Natural killer cell (primary cell): ENCODE measurements at regions of chr20 and their contacts with region 1.

Region 1: DNA sequence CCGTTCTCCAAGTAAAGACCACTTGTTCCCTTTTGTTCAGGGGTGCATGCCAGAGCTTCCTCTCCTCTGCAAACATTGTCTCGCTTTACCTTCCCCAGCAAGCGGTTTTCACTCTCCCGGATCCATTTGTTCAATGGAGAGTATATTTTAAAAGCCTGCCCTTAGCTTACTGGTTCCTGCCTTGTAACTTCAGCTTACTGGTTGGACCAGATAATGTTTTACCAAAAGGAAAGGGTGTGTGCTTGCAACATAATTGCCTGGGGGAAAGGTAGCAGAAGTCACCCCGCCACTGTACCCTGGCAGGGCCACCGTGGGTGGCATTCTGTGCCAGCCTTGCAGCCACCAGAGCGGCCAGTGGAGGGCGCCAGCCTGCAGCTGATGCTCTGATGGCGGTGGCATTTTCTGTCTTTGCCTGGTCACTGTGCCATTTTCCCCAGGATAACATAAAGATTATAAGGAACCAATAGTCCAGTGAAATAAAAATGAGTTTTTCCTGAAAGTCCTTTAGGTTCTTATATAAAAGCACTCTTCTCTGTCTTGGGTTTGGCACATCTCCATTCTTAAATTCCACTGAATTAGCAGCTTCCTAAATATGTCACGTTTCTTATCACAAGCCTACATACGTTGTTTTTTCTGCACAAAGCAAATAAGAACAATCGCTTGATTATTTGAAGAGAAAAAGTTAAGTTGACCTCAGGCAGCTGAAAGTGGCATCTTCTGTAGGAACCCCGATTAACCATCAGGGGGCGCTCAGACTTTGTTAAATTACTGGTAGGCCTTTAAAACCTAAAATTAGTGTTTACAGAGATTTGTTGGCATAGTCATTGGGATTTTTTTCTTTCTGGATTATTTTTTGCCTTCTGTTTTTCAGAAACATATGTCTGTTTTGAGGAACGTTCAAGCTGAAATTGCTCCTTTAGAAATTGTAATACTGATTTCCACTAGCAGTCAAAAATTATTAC is 67.4 kb upstream of the XRN2 start:
- DNase-seq: peak; percentile 33 to 77
- ATAC-seq: peak; percentile 73 to 81 (median 74)
- H3K4me3 ChIP-seq: no peak overlapping the region
- H3K4me3 Mint-ChIP-seq: no peak overlapping the region
- H3K27ac ChIP-seq: no peak overlapping the region
- H3K27ac Mint-ChIP-seq: no peak overlapping the region
- H3K4me1 ChIP-seq: peaks cover 4% of the 10 kb centered on the region
- H3K4me1 Mint-ChIP-seq: peaks cover 4 to 6% of the 10 kb centered on the region in 2 donors
- H3K27me3 ChIP-seq: no peaks in the 10 kb centered on the region
- H3K27me3 Mint-ChIP-seq: no peaks in the 10 kb centered on the region
- CTCF ChIP-seq: peak; percentile 83

Region 2: DNA sequence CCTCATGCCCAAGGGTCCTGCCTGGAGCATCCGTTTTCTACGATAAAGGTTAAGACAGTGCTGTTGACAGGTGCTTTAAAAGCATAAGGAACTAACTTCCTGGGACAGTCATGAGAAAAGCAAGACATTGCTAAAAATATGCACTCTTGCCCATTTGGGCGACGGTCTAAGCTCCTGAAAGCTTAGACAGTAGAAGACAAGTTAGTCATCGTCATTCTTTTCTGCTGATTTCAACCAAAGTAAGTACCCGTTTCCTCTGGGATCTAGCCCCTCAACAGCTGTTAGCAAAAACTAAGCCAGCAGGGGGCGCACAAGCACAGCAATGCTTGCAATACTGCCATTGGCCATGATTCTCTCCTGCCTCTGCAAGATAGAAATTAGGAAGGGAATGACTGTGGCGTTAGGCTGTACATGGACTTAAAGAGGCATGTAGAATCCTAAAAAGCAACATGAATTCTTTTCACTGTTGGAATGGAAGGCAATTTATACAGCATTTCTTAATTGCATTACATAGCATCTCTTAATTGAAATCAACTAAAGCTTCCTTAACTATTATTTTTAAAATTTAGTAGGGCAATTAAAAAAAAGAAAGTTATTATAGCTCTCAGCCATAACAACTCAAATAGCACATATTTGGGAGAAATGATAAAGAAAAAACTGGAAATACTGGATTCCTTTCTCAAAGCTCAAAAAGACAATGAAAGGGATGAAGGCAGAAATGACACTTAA is 375.5 kb before region 1 on chr20:
- intact Hi-C with region 1: loop called (anchors 2 kb)
- DNase-seq: peak; percentile 72 to 83
- ATAC-seq: peak; percentile 59 to 87 (median 66)
- H3K4me3 ChIP-seq: no peak overlapping the region
- H3K4me3 Mint-ChIP-seq: no peak overlapping the region
- H3K27ac ChIP-seq: no peak overlapping the region
- H3K27ac Mint-ChIP-seq: no peak overlapping the region
- H3K4me1 ChIP-seq: no peaks in the 10 kb centered on the region
- H3K4me1 Mint-ChIP-seq: no peaks in the 10 kb centered on the region
- H3K27me3 ChIP-seq: no peaks in the 10 kb centered on the region
- H3K27me3 Mint-ChIP-seq: peaks cover 7 to 23% of the 10 kb centered on the region in 2 donors
- CTCF ChIP-seq: peak; percentile 92

Region 3: GRCh38 chr20:21202284-21202683 is 33.5 kb before region 1 on chr20:
- intact Hi-C with region 1: no loop called
- DNase-seq: no peak
- ATAC-seq: no peak
- H3K4me3 ChIP-seq: no peak overlapping the region
- H3K4me3 Mint-ChIP-seq: no peak overlapping the region
- H3K27ac ChIP-seq: no peak overlapping the region
- H3K27ac Mint-ChIP-seq: no peak overlapping the region
- H3K4me1 ChIP-seq: no peaks in the 10 kb centered on the region
- H3K4me1 Mint-ChIP-seq: no peaks in the 10 kb centered on the region
- H3K27me3 ChIP-seq: no peaks in the 10 kb centered on the region
- H3K27me3 Mint-ChIP-seq: no peaks in the 10 kb centered on the region
- CTCF ChIP-seq: no peak

Region 4: DNA sequence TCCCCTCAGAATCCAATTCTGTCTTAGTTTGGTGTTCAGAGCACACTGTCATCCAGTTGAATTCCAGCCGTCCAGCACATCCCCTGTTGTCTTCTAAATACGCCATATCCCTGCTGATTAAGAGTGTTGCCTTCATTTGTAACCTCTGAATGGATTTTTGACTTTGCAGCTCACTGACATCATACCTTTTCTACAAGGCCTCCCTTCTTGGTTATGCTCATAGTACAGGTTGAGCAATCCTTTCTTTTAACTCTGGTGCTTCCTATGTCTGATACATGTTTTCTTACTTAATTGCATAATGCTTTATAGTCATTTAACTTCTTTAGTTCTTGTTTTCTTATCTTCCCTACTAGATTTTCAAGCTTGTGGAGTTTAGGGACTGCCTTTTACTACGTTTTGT is 103.7 kb after region 1 on chr20:
- intact Hi-C with region 1: no loop called
- DNase-seq: no peak
- ATAC-seq: no peak
- H3K4me3 ChIP-seq: no peak overlapping the region
- H3K4me3 Mint-ChIP-seq: no peak overlapping the region
- H3K27ac ChIP-seq: no peak overlapping the region
- H3K27ac Mint-ChIP-seq: peak overlapping the region in 1 of 2 donors; percentile 2
- H3K4me1 ChIP-seq: no peaks in the 10 kb centered on the region
- H3K4me1 Mint-ChIP-seq: peaks cover 24 to 27% of the 10 kb centered on the region in 2 donors
- H3K27me3 ChIP-seq: no peaks in the 10 kb centered on the region
- H3K27me3 Mint-ChIP-seq: no peaks in the 10 kb centered on the region
- CTCF ChIP-seq: no peak